Lower lobe of right lung (tissue), 2 donors: ENCODE measurements at regions of chr14 and their contacts with region 1.

Region 1: DNA sequence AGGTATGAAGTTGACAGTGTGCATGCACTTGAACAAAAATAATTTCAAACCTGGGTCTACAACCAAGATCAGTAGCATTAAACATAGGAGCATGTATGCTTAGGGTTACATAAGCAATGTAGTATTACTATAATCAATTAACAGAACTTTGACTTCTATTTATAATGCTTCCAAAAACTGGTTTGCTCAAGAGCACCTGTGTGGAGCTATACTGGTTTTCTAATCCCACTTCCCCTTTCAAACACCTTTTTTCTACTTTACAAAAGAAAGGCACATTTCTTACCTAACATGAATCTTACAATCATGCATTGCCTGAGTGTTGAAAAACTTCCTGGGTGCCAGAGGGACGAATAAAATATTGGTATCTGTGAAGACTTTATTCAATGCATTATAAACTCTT is 72.7 kb downstream of the EFCAB11 start:
- DNase-seq: no peak
- ATAC-seq: no peak
- H3K4me3 ChIP-seq: no peak overlapping the region
- H3K27ac ChIP-seq: no peak overlapping the region
- H3K4me1 ChIP-seq: no peaks in the 10 kb centered on the region
- H3K27me3 ChIP-seq: no peaks in the 10 kb centered on the region
- CTCF ChIP-seq: no peak

Region 2: GRCh38 chr14:89096946-89097345 is 784.9 kb before region 1 on chr14:
- intact Hi-C with region 1: loop called (anchors 5 kb)
- DNase-seq: no peak
- ATAC-seq: no peak
- H3K4me3 ChIP-seq: no peak overlapping the region
- H3K27ac ChIP-seq: no peak overlapping the region
- H3K4me1 ChIP-seq: no peaks in the 10 kb centered on the region
- H3K27me3 ChIP-seq: no peaks in the 10 kb centered on the region
- CTCF ChIP-seq: no peak

Region 3: GRCh38 chr14:90159146-90159545 is 277.3 kb after region 1 on chr14:
- intact Hi-C with region 1: no loop called
- DNase-seq: no peak
- ATAC-seq: no peak
- H3K4me3 ChIP-seq: no peak overlapping the region
- H3K27ac ChIP-seq: no peak overlapping the region
- H3K4me1 ChIP-seq: no peaks in the 10 kb centered on the region
- H3K27me3 ChIP-seq: no peaks in the 10 kb centered on the region
- CTCF ChIP-seq: no peak